ENCODE measurements at regions of chr13 and their contacts with region 1.

Region 1: DNA sequence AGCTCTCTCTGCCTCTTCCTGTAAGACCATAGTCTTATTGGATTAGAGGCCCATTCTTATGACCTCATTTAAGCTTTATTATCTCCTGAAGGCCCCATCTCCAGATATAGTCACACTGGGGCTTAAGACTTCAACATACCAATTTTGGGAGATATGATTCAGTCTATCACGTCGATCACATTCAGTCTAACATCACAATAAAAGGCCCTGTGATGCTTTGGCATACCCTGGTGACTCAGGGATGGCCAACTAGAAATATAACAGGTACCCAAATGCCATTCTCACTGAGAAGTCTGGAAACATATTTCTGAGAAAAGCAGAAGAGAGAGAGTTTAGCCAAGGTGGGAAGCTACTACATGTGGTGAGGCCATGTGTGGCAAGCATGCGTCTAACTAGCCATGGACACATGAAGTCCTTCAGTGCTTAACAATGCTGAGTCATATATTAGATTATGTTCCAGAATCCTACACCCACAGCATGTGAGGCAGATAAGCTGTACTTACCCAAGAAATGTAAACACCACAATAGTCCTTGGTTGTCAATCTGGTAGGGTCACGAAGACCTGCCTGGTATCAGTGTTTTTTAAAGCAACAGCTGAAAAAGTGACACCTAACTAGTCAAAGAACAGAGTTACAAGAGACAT is 485.1 kb downstream of the FOXO1 start:
- DNase-seq: peak; percentile 33
- H3K4me3 ChIP-seq: no peak overlapping the region
- H3K27ac ChIP-seq: no peak overlapping the region
- H3K4me1 ChIP-seq: no peaks in the 10 kb centered on the region
- H3K27me3 ChIP-seq: no peaks in the 10 kb centered on the region
- CTCF ChIP-seq: no peak
- POLR2A ChIP-seq: no peak

Region 2: DNA sequence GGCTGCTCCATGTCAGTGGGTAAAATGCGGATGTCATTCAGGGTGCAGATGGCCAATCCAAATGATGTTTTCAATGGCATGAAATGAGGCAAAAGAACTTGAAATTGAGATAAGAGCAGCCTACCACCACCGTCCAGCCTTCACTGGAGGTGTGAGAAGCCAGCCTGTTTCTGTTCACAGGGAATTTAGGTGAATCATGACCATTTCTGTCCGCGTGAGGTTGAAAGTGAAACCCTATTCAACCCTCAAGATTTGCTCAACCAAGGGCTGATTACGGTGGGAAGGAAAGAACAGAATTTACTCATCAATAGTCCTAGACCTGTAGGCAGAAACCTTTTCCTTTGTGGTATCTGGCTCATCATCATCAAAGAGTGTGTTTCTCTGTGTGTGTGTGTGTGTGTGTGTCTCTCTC is 155.1 kb before region 1 on chr13:
- CTCF ChIA-PET with region 1: no interaction called
- POLR2A ChIA-PET with region 1: no interaction called
- dilution Hi-C with region 1: no loop called
- intact Hi-C with region 1: no loop called
- DNase-seq: no peak
- H3K4me3 ChIP-seq: no peak overlapping the region
- H3K27ac ChIP-seq: no peak overlapping the region
- H3K4me1 ChIP-seq: peaks cover 12% of the 10 kb centered on the region
- H3K27me3 ChIP-seq: no peaks in the 10 kb centered on the region
- CTCF ChIP-seq: no peak
- POLR2A ChIP-seq: no peak

Region 3: DNA sequence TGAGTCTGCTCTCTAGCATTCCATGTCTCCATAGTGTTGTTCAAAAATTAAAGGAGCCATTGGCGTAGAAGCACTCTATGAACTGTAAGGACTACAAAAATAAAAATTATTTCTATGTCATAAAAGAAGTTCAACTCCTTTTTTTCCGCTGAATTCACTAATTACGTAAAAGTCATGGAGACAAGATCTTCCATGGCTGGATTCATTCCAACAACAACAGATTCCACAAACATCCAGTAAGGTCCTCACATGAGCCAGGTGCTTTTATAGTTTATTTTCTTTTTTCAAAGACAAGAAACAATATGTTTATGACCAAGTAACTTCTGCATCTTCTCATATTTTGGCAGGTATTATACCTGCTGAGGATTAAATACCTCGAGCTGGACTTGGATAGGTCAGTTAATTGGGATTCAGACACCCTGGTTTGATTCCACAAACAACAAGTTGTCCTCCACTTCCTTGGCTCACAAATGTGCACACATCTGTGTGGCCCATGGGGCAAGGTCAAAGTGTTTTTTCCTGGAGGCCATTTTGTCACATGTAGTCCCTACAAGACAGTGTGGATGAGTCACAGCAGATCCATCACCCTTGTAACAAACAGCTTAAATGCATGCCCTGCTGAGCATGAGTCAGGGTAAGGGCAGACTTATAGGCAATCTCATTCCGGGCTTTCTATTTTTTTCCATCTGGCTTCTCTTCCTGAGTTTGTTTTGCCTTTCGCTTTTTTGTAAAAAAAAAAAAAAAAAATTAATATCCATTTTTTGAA is 50.3 kb before region 1 on chr13:
- CTCF ChIA-PET with region 1: no interaction called
- POLR2A ChIA-PET with region 1: no interaction called
- dilution Hi-C with region 1: no loop called
- intact Hi-C with region 1: no loop called
- DNase-seq: peak; percentile 93
- H3K4me3 ChIP-seq: no peak overlapping the region
- H3K27ac ChIP-seq: peak overlapping the region; percentile 60
- H3K4me1 ChIP-seq: peaks cover 13% of the 10 kb centered on the region
- H3K27me3 ChIP-seq: no peaks in the 10 kb centered on the region
- CTCF ChIP-seq: no peak
- POLR2A ChIP-seq: no peak

Region 4: GRCh38 chr13:40168425-40169166 is 12.7 kb before region 1 on chr13:
- CTCF ChIA-PET with region 1: interaction called, 10 read pairs
- POLR2A ChIA-PET with region 1: no interaction called
- dilution Hi-C with region 1: no loop called
- intact Hi-C with region 1: no loop called
- DNase-seq: no peak
- H3K4me3 ChIP-seq: no peak overlapping the region
- H3K27ac ChIP-seq: no peak overlapping the region
- H3K4me1 ChIP-seq: peaks cover 14% of the 10 kb centered on the region
- H3K27me3 ChIP-seq: no peaks in the 10 kb centered on the region
- CTCF ChIP-seq: no peak
- POLR2A ChIP-seq: no peak

Measured in endothelial cell of umbilical vein (primary cell).